Activated T-helper 1 cell treated with anti-CD3 and anti-CD28 coated beads, Interleukin-12 subunit alpha, Interleukin-12 subunit beta, Interleukin-2, Interleukin-4 antibody, amounts not matched to agents 30 ng/mL and 10 ng/mL and 1 ng/mL, durations not matched to agents 14 hours and 24 hours and 36 hours (primary cell): ENCODE measurements at regions of chr9 and their contacts with region 1.

Region 1: DNA sequence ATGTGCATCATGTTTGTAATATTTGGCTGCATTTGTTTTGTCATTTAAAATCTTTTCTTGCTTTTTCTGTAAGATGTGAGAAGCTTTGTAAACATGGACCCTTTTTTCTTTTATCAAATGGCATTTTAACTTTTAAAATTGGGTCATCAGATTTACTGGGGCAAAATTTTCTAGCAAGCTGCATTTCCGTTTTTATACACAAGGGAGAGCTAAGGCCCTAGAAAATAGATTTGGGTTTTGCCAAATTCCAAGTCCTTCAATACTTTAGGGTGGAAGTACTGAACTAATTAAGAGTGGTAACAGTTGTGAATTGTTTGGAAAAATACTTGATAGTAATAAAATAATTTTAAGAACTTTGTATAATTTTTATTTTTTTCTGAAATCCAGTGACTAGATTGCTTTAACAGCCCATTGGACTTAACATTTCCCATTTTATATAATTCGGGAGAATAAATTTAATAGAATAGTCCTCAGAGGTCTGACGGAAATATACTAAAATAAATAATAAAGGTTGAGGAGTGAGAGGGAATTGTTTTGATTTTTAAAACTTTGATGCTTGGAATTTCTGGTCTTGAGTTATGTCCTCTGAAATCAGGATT is 117.4 kb downstream of the SMARCA2 start:
- DNase-seq: no peak
- H3K4me3 Mint-ChIP-seq: no peak overlapping the region
- H3K27ac Mint-ChIP-seq: no peak overlapping the region
- H3K4me1 Mint-ChIP-seq: peaks cover 4% of the 10 kb centered on the region
- H3K27me3 Mint-ChIP-seq: no peaks in the 10 kb centered on the region

Region 2: GRCh38 chr9:2180154-2180553 is 47.6 kb after region 1 on chr9:
- intact Hi-C with region 1: loop called (anchors 1 kb)
- DNase-seq: no peak
- H3K4me3 Mint-ChIP-seq: no peak overlapping the region
- H3K27ac Mint-ChIP-seq: no peak overlapping the region
- H3K4me1 Mint-ChIP-seq: no peaks in the 10 kb centered on the region
- H3K27me3 Mint-ChIP-seq: no peaks in the 10 kb centered on the region

Region 3: GRCh38 chr9:2727966-2728613 is 595.5 kb after region 1 on chr9:
- intact Hi-C with region 1: loop called (anchors 5 kb)
- DNase-seq: no peak
- H3K4me3 Mint-ChIP-seq: no peak overlapping the region
- H3K27ac Mint-ChIP-seq: no peak overlapping the region
- H3K4me1 Mint-ChIP-seq: no peaks in the 10 kb centered on the region
- H3K27me3 Mint-ChIP-seq: no peaks in the 10 kb centered on the region